Gastrocnemius medialis (tissue), 4 donors: ENCODE measurements at regions of chr4 and their contacts with region 1.

Region 1: DNA sequence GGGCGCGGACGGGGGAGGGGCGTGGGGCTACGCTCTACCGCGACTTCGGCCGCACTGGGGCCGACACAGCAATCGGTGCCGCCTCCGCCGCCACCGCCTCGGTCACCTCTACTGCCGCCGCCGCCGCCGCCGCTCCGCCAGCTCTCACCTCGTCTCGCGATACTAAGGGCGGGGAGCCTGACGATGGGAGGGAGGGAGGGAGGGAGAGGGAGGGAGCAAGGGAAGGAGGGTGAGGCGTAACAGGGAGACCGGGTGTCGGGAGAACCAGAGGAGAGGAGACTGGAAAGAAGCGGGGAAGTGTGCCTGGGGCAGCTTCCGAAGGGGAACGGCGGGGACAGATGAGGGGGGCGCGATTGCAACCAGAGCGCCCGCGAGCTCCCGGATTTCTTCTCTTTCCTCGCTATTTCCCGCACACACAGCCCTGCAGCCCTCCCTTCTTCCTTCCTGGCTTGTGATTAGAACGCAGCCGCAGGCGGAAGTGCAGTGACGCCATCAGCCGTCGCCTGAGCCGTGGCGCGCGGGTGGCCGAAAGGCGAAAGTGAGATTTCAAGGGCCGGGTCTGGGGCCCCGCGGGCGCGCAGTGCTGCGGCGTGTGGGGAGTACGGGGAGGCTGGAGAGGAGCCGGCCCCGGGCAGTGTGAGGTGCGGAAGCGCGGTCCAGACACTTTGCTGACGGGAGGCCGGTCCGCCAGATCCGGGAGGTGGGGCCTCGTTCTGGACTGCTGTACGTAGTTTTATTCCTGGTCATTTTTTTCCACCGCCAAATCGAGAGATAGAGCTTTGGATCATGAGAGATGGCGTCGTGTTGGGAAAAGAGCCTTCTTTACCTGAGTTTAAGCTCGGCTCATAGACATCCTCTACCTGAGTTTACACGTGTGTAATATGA is at the start of gene ANKRD17:
- DNase-seq: peak; percentile 83 to 90
- ATAC-seq: peak; percentile 82 to 87
- H3K4me3 ChIP-seq: peak within 1 kb of the TSS; percentile 80 to 93 (median 90)
- H3K27ac ChIP-seq: peak within 1 kb of the TSS; percentile 92 to 98 (median 96)
- H3K4me1 ChIP-seq: peaks cover 42 to 51% of the 10 kb centered on the region in 2 donors
- H3K27me3 ChIP-seq: no peaks in the 10 kb centered on the region
- CTCF ChIP-seq: peak; percentile 24 to 54 (median 27)
- POLR2A ChIP-seq: peak; percentile 76 to 77
- total RNA-seq, gene ANKRD17: 40.8 to 68.5 (median 54.8) TPM

Region 2: DNA sequence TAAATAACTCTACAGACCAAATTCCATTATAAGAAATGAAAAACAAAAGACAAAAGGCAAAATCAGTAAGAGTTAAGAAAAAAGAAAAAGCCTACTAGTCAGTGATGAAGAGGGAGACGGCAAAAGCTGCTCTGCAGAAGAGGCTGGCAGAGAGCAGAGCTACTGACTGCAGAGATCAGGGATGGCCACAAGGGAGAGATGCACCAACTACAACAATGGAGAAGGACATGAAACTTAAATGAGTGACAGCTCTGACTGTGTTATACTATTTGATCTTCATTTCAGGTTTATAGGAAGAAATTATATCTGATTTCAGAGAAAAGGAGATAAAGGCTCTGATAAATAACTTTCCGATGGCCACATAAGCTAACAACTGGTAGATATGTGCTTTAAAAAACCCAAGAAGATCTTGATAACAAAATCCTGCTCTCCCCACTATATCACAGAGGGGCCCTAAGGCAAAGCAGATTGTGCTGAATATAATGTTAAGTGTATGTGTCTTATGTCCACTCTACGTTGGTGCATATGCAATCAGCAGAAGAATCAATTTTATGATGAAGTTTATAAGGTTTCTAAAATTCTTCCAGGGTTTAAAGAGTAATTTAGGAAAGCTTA is 131.0 kb before region 1 on chr4:
- in situ Hi-C with region 1: loop called in 3 of 4 experiments (anchors 10 to 25 kb)
- intact Hi-C with region 1: loop called (anchors 2 kb)
- DNase-seq: no peak
- ATAC-seq: peak in 1 of 2 donors; percentile 76
- H3K4me3 ChIP-seq: no peak overlapping the region
- H3K27ac ChIP-seq: no peak overlapping the region
- H3K4me1 ChIP-seq: no peaks in the 10 kb centered on the region
- H3K27me3 ChIP-seq: no peaks in the 10 kb centered on the region
- CTCF ChIP-seq: peak in 2 of 5 experiments; percentile 17 to 40
- POLR2A ChIP-seq: no peak

Region 3: GRCh38 chr4:73142995-73143547 is 115.9 kb before region 1 on chr4:
- in situ Hi-C with region 1: loop called in 3 of 4 experiments (anchors 10 to 25 kb)
- intact Hi-C with region 1: no loop called
- DNase-seq: no peak
- ATAC-seq: no peak
- H3K4me3 ChIP-seq: no peak overlapping the region
- H3K27ac ChIP-seq: no peak overlapping the region
- H3K4me1 ChIP-seq: peaks cover 0 to 6% of the 10 kb centered on the region in 2 donors
- H3K27me3 ChIP-seq: no peaks in the 10 kb centered on the region
- CTCF ChIP-seq: no peak
- POLR2A ChIP-seq: no peak

Region 4: DNA sequence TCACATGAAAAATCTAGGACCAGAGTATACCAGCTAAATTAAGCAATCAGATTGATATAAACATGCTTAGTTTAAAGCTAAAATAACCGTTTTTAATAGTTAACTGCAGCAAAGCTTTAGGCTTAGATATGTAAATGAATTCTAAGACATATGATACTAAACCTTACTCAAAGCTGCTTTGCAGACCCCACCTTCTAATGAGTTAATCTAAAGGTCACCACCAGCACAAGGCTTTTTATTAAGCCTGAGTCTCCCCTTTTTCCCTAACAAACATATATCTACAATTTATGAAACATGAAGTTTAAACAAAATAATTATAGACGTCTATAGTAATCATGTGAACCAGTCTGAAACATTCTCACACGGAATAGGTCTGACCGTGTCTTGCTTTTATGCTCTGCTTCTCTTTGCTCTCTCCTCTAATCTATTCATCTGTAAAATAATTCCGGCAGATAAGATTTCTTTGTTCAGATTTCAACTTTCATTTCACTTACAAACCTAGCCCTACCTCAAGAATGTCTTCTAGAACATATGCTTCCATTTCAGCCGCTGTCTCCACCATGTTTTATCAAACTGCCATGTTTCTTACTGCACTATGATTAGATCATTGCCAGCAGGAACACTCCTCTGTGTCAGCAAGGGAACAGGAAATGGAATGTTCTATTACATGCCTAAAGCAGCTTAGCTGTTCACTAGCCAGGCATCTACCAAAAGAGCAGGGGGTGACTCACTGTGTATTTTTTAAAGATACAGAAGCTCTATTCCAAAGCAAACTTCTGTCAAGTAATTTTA is 36.3 kb before region 1 on chr4:
- in situ Hi-C with region 1: no loop called
- intact Hi-C with region 1: loop called (anchors 1 kb)
- DNase-seq: peak; percentile 59 to 71
- ATAC-seq: peak; percentile 100
- H3K4me3 ChIP-seq: peak overlapping the region; percentile 52 to 72 (median 58)
- H3K27ac ChIP-seq: peak overlapping the region; percentile 78 to 89 (median 82)
- H3K4me1 ChIP-seq: peaks cover 32% of the 10 kb centered on the region in 2 donors
- H3K27me3 ChIP-seq: no peaks in the 10 kb centered on the region
- CTCF ChIP-seq: no peak
- POLR2A ChIP-seq: peak; percentile 21 to 55